Mammary epithelial cell (primary cell): ENCODE measurements at regions of chrX and their contacts with region 1.

Region 1: DNA sequence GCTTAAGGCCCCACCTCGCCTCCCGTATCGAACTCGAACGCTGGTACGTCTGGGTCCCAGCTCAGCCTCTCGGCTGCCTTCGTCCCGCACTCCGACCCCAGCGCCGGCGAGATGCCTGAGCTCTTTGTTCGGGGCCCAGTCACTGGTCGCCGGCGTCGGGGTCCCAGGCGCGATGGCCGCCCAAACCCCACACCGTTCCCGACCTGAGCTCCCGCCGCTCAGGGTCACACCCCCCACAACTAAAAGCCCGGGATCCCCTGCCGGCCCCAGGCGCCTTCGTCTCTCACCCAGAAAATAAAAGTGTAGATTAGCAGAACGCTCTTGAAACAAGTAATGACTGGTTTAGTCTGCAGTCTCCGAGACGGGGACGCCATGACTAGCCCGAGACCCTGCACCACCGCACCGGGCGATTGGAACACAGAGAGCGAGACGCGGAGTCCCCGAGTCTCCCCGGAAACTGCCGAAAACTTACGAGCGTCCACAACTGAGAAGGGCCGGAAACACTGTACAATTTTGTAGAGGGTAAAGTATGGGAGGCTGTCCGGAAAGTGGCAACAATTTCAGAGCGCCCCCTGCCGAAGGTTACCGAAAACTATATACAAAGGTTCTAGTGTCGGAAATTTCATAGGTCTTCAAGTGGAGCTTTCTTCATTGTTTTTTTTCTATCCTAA is at the start of gene TSPAN6:
- DNase-seq: peak; percentile 75
- H3K4me3 ChIP-seq: peak within 1 kb of the TSS; percentile 66 to 69 (median 67)
- H3K27ac ChIP-seq: peak within 1 kb of the TSS; percentile 61
- H3K4me1 ChIP-seq: no peaks in the 10 kb centered on the region
- H3K27me3 ChIP-seq: no peaks in the 10 kb centered on the region
- CTCF ChIP-seq: peak; percentile 26 to 53
- total RNA-seq, gene TSPAN6: 15.6 to 27.3 TPM

Region 2: DNA sequence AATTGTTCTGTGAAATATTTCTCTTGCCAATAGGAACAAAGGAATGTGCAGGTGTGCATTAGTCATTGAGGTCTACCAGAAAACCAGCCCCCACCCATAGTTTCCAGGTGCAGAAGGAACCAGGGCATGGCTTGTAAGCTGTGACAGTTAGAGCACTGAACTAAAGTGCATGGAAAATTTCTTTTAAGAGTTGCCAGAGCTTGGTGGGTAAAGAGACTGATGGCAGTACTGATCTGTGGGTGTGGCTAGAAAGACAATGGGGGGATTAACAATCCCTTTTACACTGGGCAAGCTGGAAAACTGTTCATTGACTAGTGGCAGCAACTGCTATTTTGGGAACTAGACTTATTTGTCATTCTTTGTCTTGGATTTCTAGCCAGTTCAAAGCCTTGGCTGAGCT is 553.2 kb before region 1 on chrX:
- CTCF ChIA-PET with region 1: no interaction called
- dilution Hi-C with region 1: no loop called
- in situ Hi-C with region 1: no loop called
- intact Hi-C with region 1: loop called (anchors 10 kb)
- DNase-seq: peak; percentile 69
- H3K4me3 ChIP-seq: no peak overlapping the region
- H3K27ac ChIP-seq: peak overlapping the region; percentile 19
- H3K4me1 ChIP-seq: peaks cover 31% of the 10 kb centered on the region
- H3K27me3 ChIP-seq: no peaks in the 10 kb centered on the region
- CTCF ChIP-seq: no peak

Region 3: GRCh38 chrX:100512471-100512870 is 124.0 kb before region 1 on chrX:
- CTCF ChIA-PET with region 1: no interaction called
- dilution Hi-C with region 1: no loop called
- in situ Hi-C with region 1: no loop called
- intact Hi-C with region 1: loop called (anchors 1 kb)
- DNase-seq: peak; percentile 2
- H3K4me3 ChIP-seq: no peak overlapping the region
- H3K27ac ChIP-seq: no peak overlapping the region
- H3K4me1 ChIP-seq: no peaks in the 10 kb centered on the region
- H3K27me3 ChIP-seq: no peaks in the 10 kb centered on the region
- CTCF ChIP-seq: peak; percentile 62 to 66